Endothelial cell of umbilical vein (primary cell): ENCODE measurements at regions of chr17 and their contacts with region 1.

Region 1: DNA sequence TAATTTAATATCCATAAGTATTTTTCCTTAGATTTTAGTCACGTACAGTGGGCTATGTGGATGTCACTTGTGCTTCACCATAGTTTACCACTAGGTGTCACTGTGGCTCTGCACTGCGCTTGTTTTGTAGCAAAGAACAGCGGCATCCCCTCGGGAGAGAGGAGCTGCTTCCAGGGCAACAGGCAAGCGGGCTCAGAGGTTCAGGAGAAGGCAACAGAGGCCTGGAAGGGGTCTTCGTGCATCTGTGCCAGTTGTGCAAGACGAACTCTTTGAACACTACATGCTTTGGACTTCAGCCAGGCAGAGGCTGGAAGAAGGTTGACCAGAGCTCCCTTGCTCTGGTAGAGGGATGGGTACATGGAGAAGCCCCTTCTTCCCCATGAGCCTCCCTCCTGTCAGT is 20.6 kb downstream of the CYB561 start:
- DNase-seq: peak; percentile 87
- H3K4me3 ChIP-seq: no peak overlapping the region
- H3K27ac ChIP-seq: no peak overlapping the region
- H3K4me1 ChIP-seq: peaks cover 30% of the 10 kb centered on the region
- H3K27me3 ChIP-seq: no peaks in the 10 kb centered on the region
- CTCF ChIP-seq: peak; percentile 76 to 79
- POLR2A ChIP-seq: no peak

Region 2: DNA sequence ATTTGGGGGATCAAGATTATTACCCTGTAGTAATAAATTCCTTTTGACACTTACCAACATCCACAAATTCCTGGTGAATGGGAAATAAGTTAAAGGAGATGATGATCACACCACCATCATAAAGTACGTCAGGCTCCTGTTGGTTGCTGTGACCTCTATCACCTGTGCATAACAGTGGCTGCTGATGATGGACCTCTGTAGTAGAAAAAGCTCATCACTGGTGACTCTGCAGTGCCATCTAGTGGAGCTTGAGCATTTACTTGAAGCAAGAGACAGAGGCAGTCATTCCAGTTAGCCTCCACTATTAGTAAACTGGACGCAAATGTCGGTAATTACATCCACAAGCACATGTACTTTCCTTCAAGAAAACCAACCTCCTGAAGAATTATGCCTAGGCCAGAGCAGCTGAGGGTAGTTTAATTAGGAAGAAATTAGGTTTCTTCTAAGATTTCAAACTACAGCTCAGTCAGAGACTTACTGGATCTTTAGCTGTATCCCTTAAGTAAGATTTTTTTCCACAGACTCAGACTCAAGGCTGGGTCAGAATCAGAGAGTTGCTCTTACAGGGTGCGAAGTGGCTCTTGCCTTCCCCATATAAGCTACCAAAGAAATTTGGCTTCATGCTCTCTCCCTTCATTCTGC is 18.7 kb before region 1 on chr17:
- CTCF ChIA-PET with region 1: interaction called, 71 read pairs
- POLR2A ChIA-PET with region 1: no interaction called
- dilution Hi-C with region 1: no loop called
- intact Hi-C with region 1: no loop called
- DNase-seq: peak; percentile 87
- H3K4me3 ChIP-seq: no peak overlapping the region
- H3K27ac ChIP-seq: no peak overlapping the region
- H3K4me1 ChIP-seq: peaks cover 4% of the 10 kb centered on the region
- H3K27me3 ChIP-seq: no peaks in the 10 kb centered on the region
- CTCF ChIP-seq: peak; percentile 74 to 77
- POLR2A ChIP-seq: no peak

Region 3: GRCh38 chr17:63478791-63479494 is 53.5 kb after region 1 on chr17:
- CTCF ChIA-PET with region 1: interaction called, 540 read pairs
- POLR2A ChIA-PET with region 1: interaction called, 4 read pairs
- dilution Hi-C with region 1: no loop called
- intact Hi-C with region 1: loop called (anchors 1 kb)
- DNase-seq: peak; percentile 81
- H3K4me3 ChIP-seq: peak overlapping the region in 1 of 3 experiments; percentile 62
- H3K27ac ChIP-seq: no peak overlapping the region
- H3K4me1 ChIP-seq: peaks cover 27% of the 10 kb centered on the region
- H3K27me3 ChIP-seq: no peaks in the 10 kb centered on the region
- CTCF ChIP-seq: peak; percentile 87 to 96
- POLR2A ChIP-seq: no peak

Region 4: DNA sequence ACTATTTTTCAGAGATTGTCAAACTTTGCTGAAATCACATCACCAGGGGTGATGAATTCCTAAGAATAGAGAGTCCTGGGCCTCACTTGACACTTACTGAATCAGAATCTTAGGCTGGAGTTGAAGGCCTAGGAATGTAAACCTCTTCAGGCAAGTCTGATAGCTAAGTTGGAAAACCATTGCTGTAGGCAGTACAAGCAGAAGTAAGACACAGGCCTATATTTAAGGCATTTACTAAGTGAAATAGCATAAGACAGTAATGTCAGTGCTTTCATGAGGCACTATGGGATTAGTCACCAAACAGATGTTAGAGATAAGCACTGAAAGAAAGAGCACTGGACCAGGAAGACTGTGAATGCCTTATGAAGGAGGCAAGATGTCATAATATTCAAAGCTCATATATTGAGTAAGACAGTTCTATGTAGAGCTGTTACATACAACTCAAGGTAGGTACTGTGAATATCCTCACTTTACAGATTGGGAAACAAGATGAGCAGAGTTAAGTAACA is 146.3 kb after region 1 on chr17:
- CTCF ChIA-PET with region 1: interaction called, 18 read pairs
- POLR2A ChIA-PET with region 1: no interaction called
- dilution Hi-C with region 1: no loop called
- intact Hi-C with region 1: loop called (anchors 1 kb)
- DNase-seq: peak; percentile 58
- H3K4me3 ChIP-seq: no peak overlapping the region
- H3K27ac ChIP-seq: no peak overlapping the region
- H3K4me1 ChIP-seq: peaks cover 13% of the 10 kb centered on the region
- H3K27me3 ChIP-seq: no peaks in the 10 kb centered on the region
- CTCF ChIP-seq: no peak
- POLR2A ChIP-seq: no peak

Region 5: GRCh38 chr17:63611354-63611753 is 185.9 kb after region 1 on chr17:
- CTCF ChIA-PET with region 1: interaction called, 239 read pairs
- POLR2A ChIA-PET with region 1: no interaction called
- dilution Hi-C with region 1: no loop called
- intact Hi-C with region 1: loop called (anchors 1 kb)
- DNase-seq: no peak
- H3K4me3 ChIP-seq: no peak overlapping the region
- H3K27ac ChIP-seq: no peak overlapping the region
- H3K4me1 ChIP-seq: no peaks in the 10 kb centered on the region
- H3K27me3 ChIP-seq: no peaks in the 10 kb centered on the region
- CTCF ChIP-seq: no peak
- POLR2A ChIP-seq: no peak

Region 6: DNA sequence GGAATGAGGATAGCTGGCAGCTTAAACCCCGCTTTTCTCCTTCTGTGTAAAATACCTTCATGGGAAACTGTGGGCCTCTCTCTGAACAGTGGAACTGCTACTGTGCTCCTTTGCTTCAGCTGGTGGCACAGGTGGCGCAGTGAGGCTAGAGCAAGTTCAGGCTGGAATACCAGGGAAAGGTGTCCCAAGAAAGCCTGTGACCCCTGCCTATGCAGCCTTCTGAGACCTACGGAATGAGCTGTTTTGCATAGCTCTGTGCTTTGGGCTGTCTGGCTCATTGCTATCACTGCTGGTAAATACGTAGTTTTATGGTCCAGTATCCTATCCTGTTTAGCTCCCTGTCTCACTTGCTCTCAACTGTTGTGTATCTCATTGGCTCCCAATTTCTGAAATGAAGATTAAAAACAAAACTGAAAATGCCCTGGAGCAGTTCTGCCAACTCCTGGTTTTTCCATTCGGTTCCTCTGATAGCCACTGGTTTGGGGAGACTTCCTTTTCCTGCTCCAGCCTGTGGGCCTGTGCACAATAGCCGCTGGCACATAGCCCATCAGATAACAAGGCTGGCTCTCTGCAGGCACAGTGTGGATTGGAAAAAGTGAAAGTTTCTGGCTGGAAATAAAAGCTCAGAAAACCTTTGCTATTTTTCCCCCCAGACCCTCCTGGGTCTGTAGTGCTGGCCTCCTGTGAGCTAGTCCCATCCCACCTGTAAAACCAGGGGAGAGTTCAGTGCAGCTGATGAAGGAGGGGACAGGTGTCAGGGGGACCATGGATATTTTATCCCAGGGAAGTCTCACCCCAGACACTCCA is 250.3 kb after region 1 on chr17:
- CTCF ChIA-PET with region 1: interaction called, 24 read pairs
- POLR2A ChIA-PET with region 1: no interaction called
- dilution Hi-C with region 1: no loop called
- intact Hi-C with region 1: loop called (anchors 5 kb)
- DNase-seq: peak; percentile 99
- H3K4me3 ChIP-seq: peak overlapping the region in 2 of 3 experiments; percentile 3 to 61
- H3K27ac ChIP-seq: peak overlapping the region; percentile 91
- H3K4me1 ChIP-seq: peaks cover 51% of the 10 kb centered on the region
- H3K27me3 ChIP-seq: no peaks in the 10 kb centered on the region
- CTCF ChIP-seq: no peak
- POLR2A ChIP-seq: peak; percentile 43